Panc1 (cell line): ENCODE measurements at regions of chr2 and their contacts with region 1.

Region 1: DNA sequence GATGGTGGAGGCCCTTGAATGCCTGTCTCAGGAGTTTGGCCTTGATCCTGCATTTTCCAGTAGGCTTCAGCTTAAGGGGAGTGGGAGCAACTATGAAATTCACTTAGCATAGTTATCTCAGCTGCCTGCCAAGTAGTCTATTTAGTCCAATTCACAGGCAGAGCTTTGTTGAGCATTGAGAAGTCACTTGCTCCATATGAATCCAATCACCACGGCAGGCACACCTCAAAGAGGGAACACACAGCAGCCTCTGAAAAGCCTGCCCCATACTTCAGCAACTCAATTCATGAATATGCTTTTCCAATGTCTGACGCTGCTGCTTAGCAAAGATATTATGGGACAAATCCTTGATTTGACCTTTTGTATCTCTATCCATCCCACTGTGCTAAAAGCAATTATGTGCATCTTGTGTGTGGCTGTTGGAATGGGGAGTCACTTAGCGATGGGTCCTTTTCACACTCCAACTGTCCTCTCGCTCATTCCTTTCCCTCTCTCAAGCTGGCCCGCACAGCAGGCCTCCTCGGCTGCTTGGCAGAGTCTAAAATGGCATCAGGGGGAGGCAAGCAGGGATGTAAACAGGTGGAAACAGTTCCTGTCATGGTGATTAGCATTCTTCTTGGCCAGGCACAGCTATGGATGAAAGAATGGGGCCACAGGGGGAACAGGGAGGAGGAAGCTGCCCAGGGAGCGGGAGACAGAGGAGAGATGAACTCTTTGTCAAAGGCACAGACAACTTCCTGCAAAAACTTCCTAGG is 56.0 kb upstream of the LRPPRC start:
- DNase-seq: no peak
- ATAC-seq: no peak
- H3K4me3 ChIP-seq: no peak overlapping the region
- H3K27ac ChIP-seq: no peak overlapping the region
- H3K4me1 ChIP-seq: no peaks in the 10 kb centered on the region
- H3K27me3 ChIP-seq: no peaks in the 10 kb centered on the region
- CTCF ChIP-seq: no peak

Region 2: DNA sequence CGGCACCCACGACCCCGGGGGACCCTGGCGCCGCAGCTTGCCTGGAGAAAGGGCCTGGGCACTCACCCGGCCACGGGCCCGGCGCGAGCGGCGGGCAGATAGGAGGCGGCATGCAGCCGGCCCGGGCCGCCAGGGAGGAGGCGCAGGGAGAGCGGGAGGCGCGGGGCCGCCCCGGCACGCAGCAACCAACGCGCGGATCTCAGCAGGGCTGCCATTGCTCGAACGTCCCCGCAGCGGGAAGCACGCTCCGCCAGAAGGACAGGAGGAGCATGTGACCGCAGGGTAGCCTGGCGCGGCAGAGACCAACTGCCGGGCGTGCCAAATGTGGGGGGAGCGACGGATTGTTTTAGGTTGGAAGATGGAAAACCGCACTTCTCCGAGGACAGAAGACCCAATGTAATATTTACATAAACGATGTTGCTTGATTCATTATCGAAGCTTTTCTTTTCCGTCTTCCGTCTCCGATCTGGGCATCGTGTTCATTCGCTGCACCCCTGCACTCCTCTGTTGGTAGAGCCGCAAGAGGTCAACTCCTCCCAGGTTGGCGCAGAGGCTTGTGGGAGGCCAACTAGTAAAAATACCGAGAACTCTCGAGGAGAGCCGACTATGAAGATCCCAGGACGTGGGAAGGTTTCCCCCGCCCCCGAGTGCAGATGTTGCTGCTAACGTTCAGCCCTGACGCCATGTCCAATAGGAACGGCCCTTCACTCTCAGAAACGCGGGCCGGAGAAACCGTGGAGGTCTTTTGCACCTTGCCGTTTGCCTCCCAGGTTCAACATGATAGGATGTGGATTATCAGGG is 55.8 kb before region 1 on chr2 and contains the start of gene LRPPRC:
- CTCF ChIA-PET with region 1: no interaction called
- POLR2A ChIA-PET with region 1: no interaction called
- in situ Hi-C with region 1: no loop called
- intact Hi-C with region 1: no loop called
- DNase-seq: peak; percentile 88
- ATAC-seq: peak; percentile 96
- H3K4me3 ChIP-seq: peak within 1 kb of the TSS; percentile 91 to 97
- H3K27ac ChIP-seq: peak within 1 kb of the TSS; percentile 91
- H3K4me1 ChIP-seq: peaks cover 23% of the 10 kb centered on the region
- H3K27me3 ChIP-seq: no peaks in the 10 kb centered on the region
- CTCF ChIP-seq: no peak
- total RNA-seq, gene LRPPRC: 207 TPM

Region 3: DNA sequence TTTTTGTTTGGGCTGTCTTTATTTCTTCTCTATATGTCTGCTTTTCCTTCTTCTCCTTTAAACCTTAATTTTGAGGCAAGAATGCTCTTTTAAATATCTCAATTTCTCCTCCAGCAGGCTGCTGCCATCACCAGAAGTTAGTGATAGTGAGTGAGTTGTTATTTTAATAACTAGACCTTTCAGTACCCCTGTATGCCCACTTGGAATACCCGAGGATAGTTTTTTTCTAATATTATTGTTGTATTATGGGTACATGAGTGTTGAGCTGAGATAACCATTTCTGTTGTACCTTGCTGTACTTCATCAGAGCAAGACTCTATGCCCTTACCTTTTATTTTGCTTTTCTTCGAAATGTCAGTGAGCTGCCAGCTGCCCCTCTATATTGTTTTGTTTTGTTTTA is 167.0 kb after region 1 on chr2:
- CTCF ChIA-PET with region 1: interaction called, 10 read pairs
- POLR2A ChIA-PET with region 1: no interaction called
- in situ Hi-C with region 1: no loop called
- intact Hi-C with region 1: no loop called
- DNase-seq: no peak
- ATAC-seq: no peak
- H3K4me3 ChIP-seq: no peak overlapping the region
- H3K27ac ChIP-seq: no peak overlapping the region
- H3K4me1 ChIP-seq: no peaks in the 10 kb centered on the region
- H3K27me3 ChIP-seq: no peaks in the 10 kb centered on the region
- CTCF ChIP-seq: no peak

Region 4: DNA sequence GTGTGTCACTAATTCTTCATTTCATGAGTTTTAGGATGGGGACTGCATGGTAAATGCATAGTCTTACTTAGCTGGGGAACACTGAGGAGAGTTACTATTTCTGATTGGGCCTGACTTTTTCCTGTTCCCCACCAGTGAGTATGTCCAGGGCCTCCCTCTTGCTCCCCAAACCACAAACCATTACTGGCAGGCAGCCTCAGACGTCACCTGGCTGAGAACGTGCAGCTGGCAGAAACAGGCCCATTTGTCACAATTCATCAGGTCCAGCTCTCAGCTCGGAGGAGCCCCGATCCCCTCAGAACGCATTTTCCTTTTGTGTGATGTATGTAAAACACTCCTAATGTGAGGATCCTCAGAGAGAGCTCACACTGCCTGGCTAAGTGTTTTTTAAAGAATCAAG is 818.0 kb after region 1 on chr2:
- CTCF ChIA-PET with region 1: no interaction called
- POLR2A ChIA-PET with region 1: no interaction called
- in situ Hi-C with region 1: no loop called
- intact Hi-C with region 1: no loop called
- DNase-seq: no peak
- ATAC-seq: no peak
- H3K4me3 ChIP-seq: no peak overlapping the region
- H3K27ac ChIP-seq: no peak overlapping the region
- H3K4me1 ChIP-seq: no peaks in the 10 kb centered on the region
- H3K27me3 ChIP-seq: peaks cover 16% of the 10 kb centered on the region
- CTCF ChIP-seq: no peak